PC-3 (cell line): ENCODE measurements at regions of chr4 and their contacts with region 1.

Region 1: DNA sequence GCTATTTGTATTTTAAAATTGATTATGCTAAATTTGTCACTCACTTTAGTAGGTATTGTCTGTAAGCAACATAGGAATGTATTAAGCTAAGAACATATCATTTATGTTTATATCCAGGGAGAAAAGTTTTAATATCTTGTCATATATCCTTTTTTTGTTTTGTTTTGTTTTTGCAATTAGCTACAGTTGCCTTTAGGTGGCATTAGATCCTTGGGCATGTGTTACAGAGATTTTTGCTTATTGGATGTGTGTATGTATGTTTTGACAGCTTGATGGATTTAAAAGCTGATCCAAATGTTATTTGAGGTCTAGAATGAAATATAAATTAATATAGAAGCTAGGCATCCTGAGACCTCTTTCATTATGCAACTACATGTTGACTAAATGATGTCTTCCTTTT is 36.1 kb upstream of the OTUD4 start:
- DNase-seq: peak; percentile 61
- ATAC-seq: no peak
- H3K4me3 ChIP-seq: no peak overlapping the region
- H3K27ac ChIP-seq: no peak overlapping the region
- H3K4me1 ChIP-seq: no peaks in the 10 kb centered on the region
- H3K27me3 ChIP-seq: peaks cover 3% of the 10 kb centered on the region; the same call in 1 of the 2 replicates
- CTCF ChIP-seq: peak; percentile 89

Region 2: GRCh38 chr4:144872508-144873225 is 343.9 kb before region 1 on chr4:
- CTCF ChIA-PET with region 1: no interaction called
- POLR2A ChIA-PET with region 1: no interaction called
- intact Hi-C with region 1: no loop called
- DNase-seq: no peak
- ATAC-seq: no peak
- H3K4me3 ChIP-seq: no peak overlapping the region
- H3K27ac ChIP-seq: no peak overlapping the region
- H3K4me1 ChIP-seq: no peaks in the 10 kb centered on the region
- H3K27me3 ChIP-seq: no peaks in the 10 kb centered on the region
- CTCF ChIP-seq: no peak

Region 3: DNA sequence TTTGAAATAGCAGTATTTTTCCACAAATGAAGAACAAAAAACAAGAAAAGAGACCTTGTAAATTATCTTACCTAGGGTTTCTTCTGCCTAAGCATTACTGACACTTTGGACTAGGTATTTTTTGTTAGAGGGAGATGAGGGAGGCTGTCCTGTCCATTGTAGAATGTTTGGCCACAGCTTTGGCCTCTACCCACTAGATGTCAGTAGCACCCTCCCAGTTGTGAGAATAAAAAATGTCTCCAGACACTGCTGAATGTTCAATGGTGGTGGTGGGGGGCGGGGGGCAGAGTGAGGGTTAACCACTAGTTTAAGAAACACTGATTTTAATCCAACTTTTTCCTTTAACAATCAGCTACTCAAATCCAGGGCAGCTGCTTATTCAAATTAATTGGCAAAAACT is 62.0 kb before region 1 on chr4:
- CTCF ChIA-PET with region 1: no interaction called
- POLR2A ChIA-PET with region 1: no interaction called
- intact Hi-C with region 1: loop called (anchors 5 kb)
- DNase-seq: peak; percentile 47
- ATAC-seq: peak; percentile 75
- H3K4me3 ChIP-seq: no peak overlapping the region
- H3K27ac ChIP-seq: no peak overlapping the region
- H3K4me1 ChIP-seq: no peaks in the 10 kb centered on the region
- H3K27me3 ChIP-seq: no peaks in the 10 kb centered on the region
- CTCF ChIP-seq: peak; percentile 75